ENCODE measurements at regions of chr7 and their contacts with region 1.

Region 1: GRCh38 chr7:95608359-95609173 is 12.2 kb upstream of the PDK4 start:
- DNase-seq: peak; percentile 95

Region 2: DNA sequence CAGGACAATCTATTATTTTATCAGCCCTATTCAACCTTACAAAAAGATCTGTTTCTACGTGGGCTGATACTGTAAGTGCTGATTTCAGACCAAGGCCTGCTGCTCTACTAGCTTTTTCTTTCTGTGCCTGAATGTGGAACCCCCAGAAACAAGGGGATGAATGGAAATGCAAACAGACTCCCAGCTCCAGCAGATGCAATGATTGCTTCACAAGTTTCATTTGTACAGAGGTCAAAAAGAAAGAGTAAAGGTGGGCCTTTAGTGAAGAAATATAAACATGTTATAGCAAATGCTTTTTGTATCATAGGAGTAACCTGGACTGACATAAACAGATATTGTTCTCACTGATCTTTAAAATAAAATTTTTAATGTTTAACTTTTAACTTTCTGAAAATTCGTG is 843.6 kb after region 1 on chr7:
- intact Hi-C with region 1: loop called in 1 of 2 experiments (anchors 10 kb)
- DNase-seq: no peak

Measured in posterior vena cava (tissue), 2 donors.